ENCODE measurements at regions of chr9 and their contacts with region 1.

Region 1: DNA sequence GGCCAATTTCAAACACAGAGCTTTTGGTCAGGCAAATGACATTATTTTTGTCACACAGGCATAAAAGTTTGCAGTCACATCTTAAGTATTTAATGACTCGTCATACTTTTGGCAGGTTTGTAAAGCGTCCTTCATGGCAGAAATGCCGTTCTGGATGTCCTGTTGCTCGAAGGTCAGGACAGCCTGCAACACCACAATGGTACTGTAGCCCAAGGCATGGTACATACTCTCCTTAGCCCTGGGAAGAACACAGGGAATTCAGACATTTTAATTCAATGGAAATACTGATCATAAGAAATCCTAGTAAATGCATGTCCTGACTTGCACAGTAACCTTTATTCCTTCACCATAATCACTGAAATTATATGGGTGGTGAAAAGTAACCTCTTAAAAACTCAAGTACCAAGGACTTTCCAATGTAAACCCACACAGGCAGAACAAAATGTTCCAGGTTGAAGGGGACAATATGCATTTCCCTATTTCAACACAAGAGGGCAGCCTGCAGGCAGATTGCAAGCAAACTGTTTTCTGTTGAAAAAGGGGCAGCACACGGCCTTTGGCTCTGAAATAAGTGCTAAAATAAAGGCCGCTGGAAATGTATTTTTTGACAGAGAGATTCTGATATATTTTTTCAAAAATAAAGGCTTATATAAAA is 95.7 kb downstream of the TTC39B start:
- DNase-seq: peak in 13 of 14 experiments; percentile 10 to 78 (median 44)
- ATAC-seq: peak; percentile 63
- H3K4me3 ChIP-seq: no peak overlapping the region
- H3K4me3 Mint-ChIP-seq: no peak overlapping the region
- H3K27ac ChIP-seq: no peak overlapping the region
- H3K27ac Mint-ChIP-seq: peak overlapping the region; percentile 31
- H3K4me1 ChIP-seq: no peaks in the 10 kb centered on the region
- H3K4me1 Mint-ChIP-seq: peaks cover 6% of the 10 kb centered on the region
- H3K27me3 ChIP-seq: no peaks in the 10 kb centered on the region
- H3K27me3 Mint-ChIP-seq: no peaks in the 10 kb centered on the region
- CTCF ChIP-seq: peak; percentile 95

Region 2: DNA sequence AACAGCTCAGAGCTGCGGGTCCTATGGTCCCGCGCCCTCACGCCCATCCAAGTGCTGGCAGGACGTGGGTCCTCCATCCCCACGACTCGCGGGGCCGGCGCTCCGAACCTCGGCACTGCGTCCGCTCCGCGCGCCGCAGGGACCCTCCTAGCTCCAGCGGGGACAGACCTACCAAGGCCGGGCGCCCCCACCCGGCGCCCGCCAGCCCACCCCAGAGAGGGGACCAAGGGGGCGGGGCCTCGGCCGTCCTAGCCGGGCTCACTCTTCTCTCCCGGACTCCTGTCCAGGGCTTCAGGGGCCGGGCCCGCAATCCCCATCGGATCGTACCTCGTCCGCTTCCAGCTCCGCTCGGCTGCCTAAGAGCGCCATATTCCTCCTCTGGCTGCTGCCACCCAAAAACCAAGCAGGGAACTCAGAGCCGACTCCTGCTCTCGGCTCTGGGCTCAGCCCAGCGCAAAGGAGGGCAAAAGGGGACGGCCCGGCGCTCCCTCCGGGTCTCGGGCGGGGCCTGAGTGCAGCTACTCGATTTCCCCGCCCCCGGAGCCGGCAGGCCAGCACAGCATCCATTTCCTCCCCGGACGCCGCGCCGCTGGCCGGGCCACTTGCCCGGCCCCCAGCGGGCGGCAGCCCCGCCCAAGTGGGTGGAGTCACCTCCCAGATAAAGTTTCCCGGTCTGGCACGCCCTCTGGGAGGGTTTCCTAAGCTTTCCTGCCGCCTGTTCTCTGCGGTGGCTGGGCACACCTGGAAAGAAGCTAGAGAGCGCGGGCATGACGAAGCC is 95.7 kb after region 1 on chr9 and contains the start of gene TTC39B:
- CTCF ChIA-PET with region 1: no interaction called
- POLR2A ChIA-PET with region 1: no interaction called
- intact Hi-C with region 1: loop called (anchors 1 to 2 kb)
- DNase-seq: peak; percentile 36 to 90 (median 68)
- ATAC-seq: peak; percentile 60
- H3K4me3 ChIP-seq: peak within 1 kb of the TSS; percentile 99
- H3K4me3 Mint-ChIP-seq: peak within 1 kb of the TSS; percentile 99
- H3K27ac ChIP-seq: peak within 1 kb of the TSS; percentile 75 to 82
- H3K27ac Mint-ChIP-seq: peak within 1 kb of the TSS; percentile 87
- H3K4me1 ChIP-seq: peaks cover 34% of the 10 kb centered on the region
- H3K4me1 Mint-ChIP-seq: peaks cover 64% of the 10 kb centered on the region
- H3K27me3 ChIP-seq: no peaks in the 10 kb centered on the region
- H3K27me3 Mint-ChIP-seq: no peaks in the 10 kb centered on the region
- CTCF ChIP-seq: no peak
- total RNA-seq, gene TTC39B: 37.6 to 43.6 TPM

Region 3: DNA sequence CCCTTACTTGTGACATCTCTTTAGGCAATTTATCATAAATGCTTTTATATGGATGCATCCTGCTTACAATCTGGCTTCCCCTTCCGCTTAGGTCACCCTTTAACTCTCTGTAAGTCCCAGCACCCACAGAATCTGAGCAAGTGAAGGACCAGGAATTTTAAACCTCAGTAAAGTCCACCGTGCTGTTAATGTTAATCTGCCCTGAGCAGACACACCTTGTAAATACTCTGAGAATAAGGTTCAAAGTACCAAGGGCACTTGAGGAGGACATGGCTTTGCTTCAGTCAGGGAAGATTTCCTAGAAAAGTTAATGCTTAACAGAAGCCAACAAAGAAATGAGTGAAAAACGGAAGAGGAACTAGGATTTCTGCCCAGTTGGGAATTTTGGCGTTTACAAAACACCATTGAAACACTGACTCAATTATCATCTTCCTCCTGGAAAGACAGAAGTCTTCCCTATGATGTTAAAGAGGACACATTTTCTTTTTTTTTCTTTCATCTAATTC is 122.1 kb after region 1 on chr9:
- CTCF ChIA-PET with region 1: no interaction called
- POLR2A ChIA-PET with region 1: no interaction called
- intact Hi-C with region 1: loop called in 1 of 2 experiments (anchors 5 kb)
- DNase-seq: no peak
- ATAC-seq: no peak
- H3K4me3 ChIP-seq: no peak overlapping the region
- H3K4me3 Mint-ChIP-seq: no peak overlapping the region
- H3K27ac ChIP-seq: no peak overlapping the region
- H3K27ac Mint-ChIP-seq: no peak overlapping the region
- H3K4me1 ChIP-seq: no peaks in the 10 kb centered on the region
- H3K4me1 Mint-ChIP-seq: no peaks in the 10 kb centered on the region
- H3K27me3 ChIP-seq: no peaks in the 10 kb centered on the region
- H3K27me3 Mint-ChIP-seq: no peaks in the 10 kb centered on the region
- CTCF ChIP-seq: no peak

Region 4: GRCh38 chr9:15416880-15417279 is 205.6 kb after region 1 on chr9:
- CTCF ChIA-PET with region 1: no interaction called
- POLR2A ChIA-PET with region 1: no interaction called
- intact Hi-C with region 1: loop called (anchors 1 to 2 kb)
- DNase-seq: peak in 13 of 14 experiments; percentile 5 to 64 (median 23)
- ATAC-seq: peak; percentile 55
- H3K4me3 ChIP-seq: no peak overlapping the region
- H3K4me3 Mint-ChIP-seq: no peak overlapping the region
- H3K27ac ChIP-seq: no peak overlapping the region
- H3K27ac Mint-ChIP-seq: no peak overlapping the region
- H3K4me1 ChIP-seq: peaks cover 1% of the 10 kb centered on the region
- H3K4me1 Mint-ChIP-seq: peaks cover 3% of the 10 kb centered on the region
- H3K27me3 ChIP-seq: no peaks in the 10 kb centered on the region
- H3K27me3 Mint-ChIP-seq: no peaks in the 10 kb centered on the region
- CTCF ChIP-seq: peak; percentile 34

Region 5: GRCh38 chr9:15485836-15486666 is 274.8 kb after region 1 on chr9:
- CTCF ChIA-PET with region 1: no interaction called
- POLR2A ChIA-PET with region 1: no interaction called
- intact Hi-C with region 1: loop called in 1 of 2 experiments (anchors 5 kb)
- DNase-seq: peak in 3 of 14 experiments; percentile 33 to 54 (median 50)
- ATAC-seq: peak; percentile 70
- H3K4me3 ChIP-seq: no peak overlapping the region
- H3K4me3 Mint-ChIP-seq: no peak overlapping the region
- H3K27ac ChIP-seq: no peak overlapping the region
- H3K27ac Mint-ChIP-seq: peak overlapping the region; percentile 24
- H3K4me1 ChIP-seq: no peaks in the 10 kb centered on the region
- H3K4me1 Mint-ChIP-seq: peaks cover 49% of the 10 kb centered on the region
- H3K27me3 ChIP-seq: no peaks in the 10 kb centered on the region
- H3K27me3 Mint-ChIP-seq: no peaks in the 10 kb centered on the region
- CTCF ChIP-seq: peak; percentile 61

Region 6: DNA sequence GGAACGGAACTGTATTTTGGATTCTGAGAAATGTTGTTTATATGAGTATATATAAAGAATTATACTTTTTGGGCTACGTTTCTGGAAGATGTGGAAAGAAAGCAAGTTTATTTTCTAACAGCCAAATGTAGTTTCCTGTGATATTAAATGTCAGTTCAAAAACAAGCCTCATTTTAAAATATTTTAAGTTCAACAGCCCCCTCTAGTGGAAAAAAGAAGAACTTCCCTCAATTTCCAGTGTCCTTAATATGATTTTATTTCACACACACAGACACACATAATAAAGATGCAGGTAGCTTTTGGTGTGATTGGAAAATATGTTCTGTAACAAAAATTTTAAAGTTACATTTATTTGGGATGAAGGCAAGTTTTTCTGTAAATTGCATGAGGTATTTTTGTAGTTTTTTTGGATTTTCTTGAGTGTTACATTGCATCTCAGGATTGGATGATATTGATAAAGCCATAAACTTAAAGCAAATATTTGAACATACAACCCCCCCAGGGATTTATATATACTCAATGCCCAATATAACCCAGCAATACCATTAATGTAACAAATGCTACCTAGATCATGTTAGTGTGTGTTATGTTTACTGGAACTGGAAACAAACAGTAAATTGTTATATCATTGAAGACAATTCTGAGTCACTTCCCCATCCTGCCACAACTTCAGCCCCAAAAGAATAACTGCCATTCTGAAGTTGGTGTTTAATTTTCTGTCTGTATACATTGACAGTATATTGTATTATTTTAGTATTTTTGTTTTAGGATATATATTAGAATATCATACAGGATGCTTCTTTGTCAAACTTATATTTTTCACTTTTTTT is 395.6 kb after region 1 on chr9:
- CTCF ChIA-PET with region 1: interaction called, 3 read pairs
- POLR2A ChIA-PET with region 1: no interaction called
- intact Hi-C with region 1: loop called (anchors 1 to 5 kb)
- DNase-seq: peak in 4 of 14 experiments; percentile 13 to 68 (median 62)
- ATAC-seq: no peak
- H3K4me3 ChIP-seq: no peak overlapping the region
- H3K4me3 Mint-ChIP-seq: no peak overlapping the region
- H3K27ac ChIP-seq: no peak overlapping the region
- H3K27ac Mint-ChIP-seq: no peak overlapping the region
- H3K4me1 ChIP-seq: no peaks in the 10 kb centered on the region
- H3K4me1 Mint-ChIP-seq: no peaks in the 10 kb centered on the region
- H3K27me3 ChIP-seq: no peaks in the 10 kb centered on the region
- H3K27me3 Mint-ChIP-seq: no peaks in the 10 kb centered on the region
- CTCF ChIP-seq: peak; percentile 76

Measured in CD4-positive, alpha-beta T cell (primary cell).